Activated CD4-positive, alpha-beta memory T cell treated with anti-CD3 and anti-CD28 coated beads for 36 hours (primary cell): ENCODE measurements at regions of chr2 and their contacts with region 1.

Region 1: GRCh38 chr2:230751062-230751461 is 38.4 kb downstream of the CAB39 start:
- DNase-seq: no peak
- H3K4me3 Mint-ChIP-seq: no peak overlapping the region
- H3K27ac Mint-ChIP-seq: peak overlapping the region; percentile 76
- H3K4me1 Mint-ChIP-seq: peaks cover 76% of the 10 kb centered on the region
- H3K27me3 Mint-ChIP-seq: no peaks in the 10 kb centered on the region

Region 2: DNA sequence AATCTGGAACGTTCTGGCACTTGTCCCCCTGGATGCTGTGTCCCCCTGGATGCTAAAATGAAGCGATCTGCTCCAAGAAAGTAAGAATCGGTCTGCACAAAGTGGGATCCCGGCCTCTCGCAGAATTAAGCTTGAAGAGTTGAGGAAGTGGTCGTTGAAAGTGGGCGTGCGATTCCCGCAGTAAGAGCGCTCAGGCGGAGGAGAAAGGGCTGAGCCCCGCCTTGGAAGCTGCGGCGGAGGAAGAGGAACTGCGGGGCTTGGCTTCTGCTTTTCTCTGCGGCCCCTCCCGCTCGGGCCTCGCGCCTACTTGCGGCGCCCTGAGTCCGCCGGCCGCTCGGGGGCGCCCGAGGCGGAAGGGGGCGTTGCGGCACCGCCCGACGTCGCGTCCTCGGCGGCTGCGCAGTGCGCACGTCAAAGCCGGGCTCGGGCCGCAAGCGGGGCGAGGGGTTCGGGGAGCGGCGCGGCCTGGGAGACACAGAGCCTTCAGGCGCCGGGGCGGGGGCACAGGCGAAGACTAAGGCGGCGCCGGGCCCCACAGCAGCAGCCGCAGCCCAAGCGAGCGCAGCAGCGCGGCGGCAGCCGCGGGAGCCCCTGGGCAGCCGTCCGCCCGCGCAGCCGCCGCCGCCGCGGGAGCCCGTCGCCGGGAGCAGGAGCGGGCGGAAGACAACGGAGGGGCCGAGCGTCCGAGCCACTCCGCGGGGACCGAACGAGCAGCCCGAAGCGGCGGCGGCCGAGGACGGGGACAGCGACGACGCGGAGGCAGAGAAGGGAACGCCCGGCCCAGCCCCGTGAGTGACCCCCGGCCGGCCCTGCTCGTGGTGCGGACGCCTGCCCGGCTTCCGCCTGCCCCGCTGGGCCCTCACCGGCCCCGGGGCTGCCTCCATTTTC is 38.4 kb before region 1 on chr2 and contains the start of gene CAB39:
- CTCF ChIA-PET with region 1: interaction called, 3 read pairs
- POLR2A ChIA-PET with region 1: no interaction called
- intact Hi-C with region 1: loop called (anchors 5 kb)
- DNase-seq: peak; percentile 91
- H3K4me3 Mint-ChIP-seq: peak within 1 kb of the TSS; percentile 93
- H3K27ac Mint-ChIP-seq: peak within 1 kb of the TSS; percentile 91
- H3K4me1 Mint-ChIP-seq: peaks cover 41% of the 10 kb centered on the region
- H3K27me3 Mint-ChIP-seq: no peaks in the 10 kb centered on the region
- total RNA-seq, gene CAB39: 128 to 129 TPM

Region 3: GRCh38 chr2:230738391-230738811 is 12.7 kb before region 1 on chr2:
- CTCF ChIA-PET with region 1: interaction called, 3 read pairs
- POLR2A ChIA-PET with region 1: interaction called, 3 read pairs
- intact Hi-C with region 1: loop called (anchors 2 kb)
- DNase-seq: no peak
- H3K4me3 Mint-ChIP-seq: no peak overlapping the region
- H3K27ac Mint-ChIP-seq: peak overlapping the region; percentile 63
- H3K4me1 Mint-ChIP-seq: peaks cover 77% of the 10 kb centered on the region
- H3K27me3 Mint-ChIP-seq: no peaks in the 10 kb centered on the region

Region 4: DNA sequence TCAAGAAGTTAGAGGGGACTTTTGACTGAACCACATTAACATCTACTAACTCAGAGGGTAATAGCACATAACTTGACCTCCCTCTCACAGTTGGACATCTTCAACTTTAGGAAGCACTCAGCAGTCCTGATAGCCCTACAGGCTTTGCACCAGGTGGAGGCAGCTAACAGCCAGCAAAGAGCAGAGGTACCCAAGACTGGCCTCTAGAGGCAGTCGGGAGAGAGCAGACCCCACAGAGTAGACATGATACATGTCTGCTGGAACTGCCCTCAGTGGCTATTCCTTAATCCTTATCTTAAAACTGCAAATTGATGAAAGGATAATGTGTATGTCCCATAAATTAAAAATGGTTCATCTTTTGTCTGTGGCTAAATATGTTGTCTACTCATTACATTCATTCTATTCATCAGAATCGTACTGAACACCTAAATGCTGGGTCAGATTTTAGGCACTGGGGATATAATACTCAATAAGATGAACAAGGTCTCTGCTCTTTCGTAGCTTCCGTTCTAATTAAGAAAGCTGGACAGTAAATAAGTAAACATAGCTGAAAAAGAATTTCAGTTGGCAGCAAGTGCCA is 11.3 kb after region 1 on chr2:
- CTCF ChIA-PET with region 1: no interaction called
- POLR2A ChIA-PET with region 1: interaction called, 3 read pairs
- intact Hi-C with region 1: loop called (anchors 2 kb)
- DNase-seq: peak; percentile 46
- H3K4me3 Mint-ChIP-seq: no peak overlapping the region
- H3K27ac Mint-ChIP-seq: no peak overlapping the region
- H3K4me1 Mint-ChIP-seq: peaks cover 69% of the 10 kb centered on the region
- H3K27me3 Mint-ChIP-seq: no peaks in the 10 kb centered on the region

Region 5: DNA sequence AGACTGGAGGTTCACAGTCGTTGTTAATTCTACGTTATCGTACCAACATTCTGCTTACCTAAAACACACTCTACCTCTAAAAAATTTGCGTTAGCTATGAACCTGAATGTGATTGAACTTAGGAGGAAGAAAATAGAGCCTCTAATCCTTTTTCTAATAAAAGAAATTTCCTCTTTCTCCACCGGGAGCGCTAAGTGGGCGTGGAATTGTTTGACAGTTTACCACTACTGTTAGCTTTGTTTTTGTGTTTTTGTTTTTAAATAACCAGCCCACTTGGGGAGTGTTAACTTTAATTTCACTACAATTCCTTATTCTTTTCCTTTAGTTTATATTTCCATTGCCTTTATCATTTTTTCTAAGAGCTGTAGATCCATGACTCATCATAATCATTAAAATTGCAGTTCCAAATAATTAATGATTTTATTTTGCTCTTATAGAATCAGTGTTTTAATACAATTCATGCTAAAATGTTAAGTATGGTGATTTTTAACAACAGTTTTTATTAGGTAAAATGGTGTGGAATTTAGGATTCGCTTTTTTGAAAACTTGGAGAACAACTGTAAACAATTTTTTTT is 58.7 kb after region 1 on chr2:
- CTCF ChIA-PET with region 1: no interaction called
- POLR2A ChIA-PET with region 1: no interaction called
- intact Hi-C with region 1: loop called (anchors 2 kb)
- DNase-seq: no peak
- H3K4me3 Mint-ChIP-seq: no peak overlapping the region
- H3K27ac Mint-ChIP-seq: no peak overlapping the region
- H3K4me1 Mint-ChIP-seq: peaks cover 16% of the 10 kb centered on the region
- H3K27me3 Mint-ChIP-seq: no peaks in the 10 kb centered on the region